ENCODE measurements at regions of chr13 and their contacts with region 1.

Region 1: DNA sequence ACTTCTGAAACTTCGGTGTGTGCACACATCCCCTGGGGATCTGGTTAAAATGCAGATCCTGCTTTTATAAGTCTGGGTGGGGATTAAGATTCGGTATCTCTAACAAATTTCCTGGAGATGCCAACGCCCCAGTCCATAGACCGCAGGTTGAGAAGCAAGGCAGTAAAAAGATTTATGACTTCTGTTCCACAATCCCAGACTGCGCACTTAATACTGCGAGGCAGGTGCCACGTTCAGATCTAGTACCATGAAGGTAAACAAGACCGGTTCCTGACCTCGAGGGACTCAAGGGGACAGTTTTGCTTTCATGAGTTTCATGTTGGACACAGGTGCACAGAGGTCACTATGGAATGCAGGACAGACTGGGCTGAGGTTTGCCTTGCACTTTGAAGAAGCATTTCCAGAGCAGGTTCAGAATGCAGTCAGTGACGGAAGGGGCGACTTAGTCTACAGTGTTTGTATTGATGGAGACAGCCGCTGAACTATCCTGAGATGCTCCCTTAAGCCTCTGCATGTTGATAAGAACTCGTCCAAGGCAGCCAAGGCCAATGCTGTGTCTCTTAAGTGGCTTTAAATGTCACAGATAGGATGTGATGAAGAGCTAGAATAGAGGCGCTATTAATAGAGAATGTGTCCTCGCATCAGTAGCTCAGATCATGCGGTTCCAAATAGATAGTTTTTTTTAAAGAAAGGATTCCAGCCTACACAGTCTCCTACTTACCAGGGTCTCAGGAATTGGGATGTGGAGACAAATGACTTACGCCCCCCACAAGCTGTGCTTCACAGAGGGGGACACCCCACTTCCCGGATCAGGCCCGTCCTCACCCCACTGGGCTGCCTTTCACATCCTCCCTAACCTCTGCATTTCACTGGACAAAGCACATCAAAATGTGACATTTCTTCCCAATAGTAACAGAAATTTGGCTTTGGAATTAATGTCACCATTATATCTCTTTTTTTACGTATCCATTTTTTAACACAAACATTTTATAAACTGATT is 97.1 kb upstream of the IRS2 start:
- DNase-seq: no peak
- ATAC-seq: no peak
- H3K4me3 ChIP-seq: no peak overlapping the region
- H3K27ac ChIP-seq: no peak overlapping the region
- H3K4me1 ChIP-seq: no peaks in the 10 kb centered on the region
- H3K27me3 ChIP-seq: no peaks in the 10 kb centered on the region
- CTCF ChIP-seq: no peak

Region 2: GRCh38 chr13:109154966-109155761 is 728.3 kb before region 1 on chr13:
- CTCF ChIA-PET with region 1: no interaction called
- POLR2A ChIA-PET with region 1: interaction called, 16 read pairs
- in situ Hi-C with region 1: no loop called
- intact Hi-C with region 1: no loop called
- DNase-seq: no peak
- ATAC-seq: peak; percentile 17
- H3K4me3 ChIP-seq: peak overlapping the region; percentile 21 to 57
- H3K27ac ChIP-seq: peak overlapping the region; percentile 79
- H3K4me1 ChIP-seq: peaks cover 47% of the 10 kb centered on the region
- H3K27me3 ChIP-seq: no peaks in the 10 kb centered on the region
- CTCF ChIP-seq: peak; percentile 14; the same call in 1 of the 2 replicates

Region 3: DNA sequence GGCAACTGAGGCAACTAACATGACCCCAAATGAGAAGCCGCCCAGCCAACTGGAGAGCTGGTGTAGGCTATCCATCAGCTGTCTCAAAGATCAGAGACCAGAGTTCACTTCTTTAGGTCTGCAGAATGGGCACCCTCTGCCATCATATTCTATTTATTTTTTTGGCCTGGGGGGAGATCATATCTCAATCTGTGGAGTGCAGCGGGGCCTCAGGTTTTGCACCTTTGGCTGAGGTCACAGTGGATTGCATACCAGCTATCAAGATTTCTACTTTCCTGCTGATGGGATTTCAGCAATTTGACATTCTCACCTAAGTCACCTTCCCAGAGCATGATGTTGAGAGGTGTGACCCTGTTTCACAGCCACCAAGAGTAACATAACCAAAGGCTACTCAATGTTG is 196.7 kb after region 1 on chr13:
- CTCF ChIA-PET with region 1: no interaction called
- POLR2A ChIA-PET with region 1: no interaction called
- in situ Hi-C with region 1: no loop called
- intact Hi-C with region 1: no loop called
- DNase-seq: no peak
- ATAC-seq: no peak
- H3K4me3 ChIP-seq: no peak overlapping the region
- H3K27ac ChIP-seq: no peak overlapping the region
- H3K4me1 ChIP-seq: no peaks in the 10 kb centered on the region
- H3K27me3 ChIP-seq: no peaks in the 10 kb centered on the region
- CTCF ChIP-seq: no peak

Region 4: GRCh38 chr13:110298505-110299282 is 415.2 kb after region 1 on chr13:
- CTCF ChIA-PET with region 1: no interaction called
- POLR2A ChIA-PET with region 1: no interaction called
- in situ Hi-C with region 1: no loop called
- intact Hi-C with region 1: no loop called
- DNase-seq: no peak
- ATAC-seq: no peak
- H3K4me3 ChIP-seq: no peak overlapping the region
- H3K27ac ChIP-seq: no peak overlapping the region
- H3K4me1 ChIP-seq: no peaks in the 10 kb centered on the region
- H3K27me3 ChIP-seq: no peaks in the 10 kb centered on the region; the same call in 1 of the 2 replicates
- CTCF ChIP-seq: no peak

Measured in Panc1 (cell line).